ENCODE measurements at regions of chr6 and their contacts with region 1.

Region 1: GRCh38 chr6:56902641-56903464 is 52.1 kb upstream of the BEND6 start:
- DNase-seq: no peak
- ATAC-seq: peak in 2 of 4 donors; percentile 42 to 56
- H3K4me3 ChIP-seq: peak overlapping the region; percentile 2
- H3K27ac ChIP-seq: no peak overlapping the region
- H3K4me1 ChIP-seq: no peaks in the 10 kb centered on the region
- H3K27me3 ChIP-seq: no peaks in the 10 kb centered on the region
- CTCF ChIP-seq: peak; percentile 72

Region 2: DNA sequence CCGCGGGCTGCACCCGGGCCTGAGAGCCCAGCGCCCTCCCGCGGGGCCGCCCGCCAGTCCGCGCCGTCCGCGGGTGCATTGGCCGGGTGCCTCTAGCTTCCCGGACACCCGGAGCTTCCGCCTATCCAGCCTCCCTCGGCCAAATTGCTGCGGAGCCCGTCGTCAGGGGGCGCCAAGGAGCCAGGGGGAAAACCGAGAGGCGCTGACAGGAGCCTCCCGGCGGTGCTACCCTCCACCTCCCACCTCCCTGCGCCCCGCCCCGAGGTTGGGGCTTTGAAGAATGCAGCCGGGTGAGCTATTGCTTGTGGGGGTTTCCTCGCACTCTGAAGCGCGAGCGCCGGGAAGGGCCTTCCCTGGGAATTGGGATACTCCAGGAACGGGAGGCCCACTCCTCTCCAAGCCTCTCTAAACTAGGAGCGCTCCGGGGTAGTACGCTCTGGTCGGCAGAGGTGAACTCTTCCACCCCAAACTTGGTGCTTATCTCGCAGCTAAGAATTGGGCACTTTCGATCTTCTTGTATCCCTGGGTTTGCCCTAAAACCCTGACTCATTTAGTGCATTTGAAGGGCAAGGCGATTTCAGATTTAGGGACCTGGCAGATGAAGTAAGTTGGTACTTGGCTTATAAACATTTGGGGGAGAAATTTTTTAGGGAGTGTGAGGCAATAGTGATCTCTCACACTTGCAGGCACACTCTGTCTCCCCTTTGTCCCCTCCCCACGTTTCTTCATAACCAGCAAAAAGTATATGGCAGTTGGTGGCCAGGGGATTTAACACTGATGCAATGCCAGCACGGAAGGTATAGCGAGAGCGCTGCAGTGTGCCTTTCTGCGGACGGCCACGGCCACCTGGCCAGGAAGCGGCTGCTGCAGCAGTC is 52.6 kb after region 1 on chr6:
- intact Hi-C with region 1: loop called in 1 of 2 experiments (anchors 2 kb)
- DNase-seq: peak; percentile 81 to 90
- ATAC-seq: peak; percentile 84 to 97 (median 90)
- H3K4me3 ChIP-seq: peak overlapping the region; percentile 72
- H3K27ac ChIP-seq: peak overlapping the region; percentile 32
- H3K4me1 ChIP-seq: peaks cover 7% of the 10 kb centered on the region
- H3K27me3 ChIP-seq: no peaks in the 10 kb centered on the region
- CTCF ChIP-seq: peak; percentile 69

Measured in psoas muscle (tissue), 8 donors.